ENCODE measurements at regions of chr16 and their contacts with region 1.

Region 1: GRCh38 chr16:19907161-19907992 is 22.7 kb upstream of the GPRC5B start:
- DNase-seq: peak; percentile 83
- ATAC-seq: peak; percentile 89

Region 2: GRCh38 chr16:20166531-20167235 is 259.3 kb after region 1 on chr16:
- intact Hi-C with region 1: no loop called
- DNase-seq: no peak
- ATAC-seq: no peak

Region 3: DNA sequence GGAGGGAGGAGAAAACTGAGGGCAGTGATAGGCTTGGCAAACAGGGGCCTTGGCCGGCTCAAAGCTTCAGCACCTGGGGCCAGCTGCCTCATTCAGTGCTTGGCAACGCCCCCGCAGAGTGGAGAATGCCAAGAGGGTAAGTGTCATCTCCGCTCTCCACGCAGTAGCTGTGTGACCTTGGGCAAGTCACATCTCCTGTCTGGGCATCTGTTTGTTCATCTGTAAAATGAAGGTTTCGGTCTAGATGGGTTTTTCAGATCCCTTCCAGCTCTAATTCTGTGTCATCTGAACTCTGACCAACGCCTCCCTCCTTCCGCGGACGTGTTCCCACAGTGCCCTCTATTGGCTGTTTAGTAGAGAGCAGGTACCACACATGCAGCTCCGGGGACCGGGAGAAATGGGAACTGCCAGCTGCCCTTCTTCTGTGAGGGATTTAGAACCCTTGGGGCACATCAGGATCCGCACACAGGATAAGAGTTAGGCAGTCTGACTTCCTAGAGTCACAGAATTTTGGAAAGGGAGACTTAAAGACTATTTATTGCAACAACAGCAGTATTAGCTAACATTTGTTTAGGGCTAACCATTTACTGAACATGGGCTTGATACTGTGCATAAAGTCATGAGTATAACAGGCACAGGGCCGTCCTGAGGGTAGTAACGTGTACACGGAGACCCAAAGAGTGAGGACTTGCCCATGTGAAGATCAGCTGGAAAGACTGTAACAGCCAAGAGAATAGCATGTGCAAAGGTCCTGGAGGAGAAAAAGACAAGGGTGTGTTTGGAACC is 393.1 kb after region 1 on chr16:
- intact Hi-C with region 1: loop called (anchors 5 kb)
- DNase-seq: no peak
- ATAC-seq: no peak

Region 4: DNA sequence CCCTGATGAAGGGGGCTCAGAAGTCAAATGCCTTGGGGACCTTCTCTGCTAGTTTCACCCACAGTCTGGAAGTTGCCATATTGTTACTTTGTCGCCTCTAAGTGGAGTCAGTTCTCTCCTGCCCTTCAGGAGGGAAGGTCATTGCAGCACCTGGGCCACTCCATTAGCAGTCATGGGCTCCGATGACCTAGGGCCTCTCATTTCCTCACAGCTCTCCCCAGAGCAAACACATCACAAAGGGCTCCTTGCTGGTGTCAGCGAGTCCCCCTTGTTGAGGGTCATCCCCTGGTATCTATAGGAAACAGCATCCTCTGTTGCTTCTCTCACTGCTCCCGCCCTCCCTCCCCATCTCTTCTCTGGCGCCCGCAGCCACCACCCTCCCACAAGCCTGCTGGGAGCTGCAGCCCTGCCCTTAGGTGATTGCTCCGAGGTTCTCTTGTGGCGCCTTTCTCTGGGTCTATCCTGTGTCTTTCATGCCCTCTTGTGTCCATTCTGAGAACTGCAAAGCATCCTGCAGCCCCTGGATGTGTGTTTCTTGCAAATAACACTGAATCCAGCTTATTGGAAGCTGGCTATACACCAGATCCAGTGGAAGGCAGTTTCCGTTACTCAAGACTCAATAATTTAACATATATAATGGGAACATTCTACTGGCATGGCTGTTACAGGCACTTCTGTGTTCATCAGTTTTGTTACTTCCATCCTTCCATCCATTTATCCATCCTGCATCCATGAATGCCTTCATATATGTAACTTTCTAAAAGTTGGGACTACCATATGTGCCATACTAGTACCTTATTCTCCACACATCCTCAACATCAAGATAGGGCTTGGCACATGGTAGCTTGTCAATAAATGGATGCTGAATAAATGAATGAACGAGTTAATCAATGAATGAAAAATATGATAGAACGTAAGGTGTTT is 476.0 kb after region 1 on chr16:
- intact Hi-C with region 1: loop called (anchors 2 kb)
- DNase-seq: no peak
- ATAC-seq: peak; percentile 51